ENCODE measurements at regions of chr1 and their contacts with region 1.

Region 1: DNA sequence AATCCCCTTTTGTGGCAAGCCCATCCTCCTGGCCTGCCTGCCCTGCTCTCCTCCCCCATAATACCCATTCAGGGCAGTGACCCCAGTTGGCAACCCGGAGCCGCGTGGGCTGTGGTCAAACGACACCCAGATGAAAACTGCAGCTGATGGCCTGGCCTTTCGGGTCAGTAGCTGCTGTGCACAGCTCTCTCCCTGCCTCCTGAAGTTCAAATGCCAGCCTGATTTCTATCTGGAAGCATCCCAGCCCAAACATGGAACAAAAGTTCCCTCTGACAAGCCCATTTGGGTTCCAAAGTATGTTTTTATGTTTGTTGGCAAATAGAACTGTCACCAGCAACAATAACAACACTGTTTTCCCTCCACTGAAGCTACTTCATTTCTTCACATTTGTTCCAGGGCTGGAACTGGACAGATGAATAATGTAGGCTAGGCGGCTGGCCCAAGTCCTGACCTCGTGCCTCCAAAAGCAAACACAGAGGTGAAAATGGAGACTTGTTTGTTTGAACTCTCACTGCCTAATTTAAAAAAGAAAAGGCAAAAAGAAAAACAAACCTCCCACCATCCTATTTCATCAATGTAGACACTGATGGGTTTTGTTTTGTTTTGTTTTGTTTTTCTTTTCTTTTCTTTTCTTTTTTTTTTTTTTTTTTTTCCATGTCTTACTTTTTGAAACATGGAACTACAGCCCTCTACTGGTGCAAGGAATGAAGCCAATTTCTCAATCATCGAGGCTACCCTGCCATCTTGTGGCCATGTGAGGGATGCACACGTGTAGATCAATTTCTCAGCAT is 179.0 kb downstream of the ADSS2 start:
- DNase-seq: peak; percentile 94
- ATAC-seq: peak; percentile 32
- H3K4me3 ChIP-seq: peak overlapping the region; percentile 60; the same call in 1 of the 2 replicates
- H3K27ac ChIP-seq: no peak overlapping the region
- H3K4me1 ChIP-seq: peaks cover 33% of the 10 kb centered on the region
- H3K27me3 ChIP-seq: no peaks in the 10 kb centered on the region
- CTCF ChIP-seq: peak; percentile 100

Region 2: DNA sequence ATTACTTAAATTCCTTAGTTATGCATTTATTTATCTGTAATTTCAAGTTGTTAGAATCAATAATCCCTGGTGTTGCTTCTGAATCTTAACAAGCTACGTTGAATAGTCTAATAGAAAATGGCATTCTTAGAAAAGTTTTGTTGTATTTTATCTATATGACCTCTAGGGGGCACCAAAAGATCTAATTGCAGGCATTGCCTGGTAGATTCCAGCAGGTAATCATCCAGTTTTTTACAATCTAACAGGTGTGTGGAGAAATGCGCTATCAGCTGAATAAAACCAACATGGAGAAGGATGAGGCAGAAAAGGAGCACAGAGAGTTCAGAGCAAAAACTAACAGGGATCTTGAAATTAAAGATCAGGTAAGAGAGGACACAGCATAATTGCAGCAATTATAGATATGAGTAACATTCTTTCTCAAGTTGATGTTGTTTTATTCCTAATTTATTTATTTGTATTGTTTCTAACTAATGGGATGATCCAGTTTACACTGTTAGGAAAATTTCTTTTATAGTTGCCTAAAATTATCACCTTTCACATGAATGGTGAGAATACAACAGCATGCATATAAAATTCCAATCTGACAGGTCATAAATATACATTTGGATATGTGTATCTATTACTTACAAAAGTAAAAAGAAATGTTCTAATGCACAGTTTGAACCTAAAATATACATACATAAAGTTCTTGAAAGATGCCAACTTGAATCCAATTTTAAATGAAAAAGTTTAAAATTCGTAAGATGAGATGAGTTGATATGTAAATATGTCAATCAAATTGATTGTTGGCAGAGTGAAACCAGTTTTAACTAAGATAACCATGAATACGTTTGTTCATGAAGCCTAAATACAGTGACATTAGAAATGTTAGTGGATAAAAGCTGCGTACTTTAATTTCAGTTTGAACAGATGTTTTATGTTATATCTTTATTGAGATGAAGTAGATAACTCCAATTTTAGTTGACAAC is 928.4 kb before region 1 on chr1:
- CTCF ChIA-PET with region 1: interaction called, 3 read pairs
- POLR2A ChIA-PET with region 1: no interaction called
- intact Hi-C with region 1: loop called (anchors 1 kb)
- DNase-seq: peak; percentile 88
- ATAC-seq: peak; percentile 61
- H3K4me3 ChIP-seq: no peak overlapping the region
- H3K27ac ChIP-seq: no peak overlapping the region
- H3K4me1 ChIP-seq: peaks cover 7% of the 10 kb centered on the region
- H3K27me3 ChIP-seq: no peaks in the 10 kb centered on the region
- CTCF ChIP-seq: peak; percentile 98

Region 3: GRCh38 chr1:243748706-243749283 is 523.9 kb before region 1 on chr1:
- CTCF ChIA-PET with region 1: no interaction called
- POLR2A ChIA-PET with region 1: no interaction called
- intact Hi-C with region 1: loop called (anchors 1 kb)
- DNase-seq: peak; percentile 90
- ATAC-seq: peak; percentile 100
- H3K4me3 ChIP-seq: no peak overlapping the region
- H3K27ac ChIP-seq: no peak overlapping the region
- H3K4me1 ChIP-seq: peaks cover 5% of the 10 kb centered on the region
- H3K27me3 ChIP-seq: no peaks in the 10 kb centered on the region
- CTCF ChIP-seq: peak; percentile 88

Region 4: DNA sequence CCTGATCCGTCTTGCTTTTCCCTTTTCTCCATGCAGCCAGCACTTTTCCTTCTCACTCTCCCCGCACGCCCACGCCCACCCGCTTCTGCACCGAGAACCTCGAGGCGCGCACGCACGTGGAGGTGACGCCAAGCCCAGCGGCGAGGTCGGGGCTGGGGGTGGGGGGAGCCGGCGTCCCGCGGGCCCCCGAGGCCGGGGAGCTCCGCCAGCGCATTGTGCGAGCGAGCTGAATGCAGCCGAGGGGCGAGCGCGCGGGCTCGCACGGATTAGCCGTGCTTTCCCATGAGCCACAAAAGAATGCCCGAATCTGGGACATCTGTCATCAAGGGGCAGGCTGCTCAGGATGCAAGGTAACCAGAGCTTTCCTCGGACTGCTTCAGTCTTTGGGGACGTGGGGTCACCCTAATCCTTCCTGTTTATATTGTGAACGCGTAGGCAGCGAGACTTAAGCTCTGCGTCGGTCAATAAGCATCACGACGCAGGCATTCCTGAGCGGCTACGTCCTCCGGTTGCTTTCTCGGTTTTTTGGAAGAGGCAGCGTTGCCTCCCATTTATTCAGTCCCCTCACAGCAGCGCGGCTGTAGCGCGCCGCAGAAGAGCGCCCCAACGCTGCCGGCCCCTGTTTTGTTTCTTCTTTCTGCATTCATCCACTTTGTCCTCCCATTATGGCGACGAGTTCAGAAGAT is 355.3 kb before region 1 on chr1:
- CTCF ChIA-PET with region 1: no interaction called
- POLR2A ChIA-PET with region 1: no interaction called
- intact Hi-C with region 1: loop called (anchors 2 kb)
- DNase-seq: peak; percentile 93
- ATAC-seq: peak; percentile 83
- H3K4me3 ChIP-seq: peak overlapping the region; percentile 70
- H3K27ac ChIP-seq: peak overlapping the region; percentile 43
- H3K4me1 ChIP-seq: peaks cover 29% of the 10 kb centered on the region
- H3K27me3 ChIP-seq: no peaks in the 10 kb centered on the region
- CTCF ChIP-seq: peak; percentile 31; the same call in 1 of the 2 replicates

Region 5: DNA sequence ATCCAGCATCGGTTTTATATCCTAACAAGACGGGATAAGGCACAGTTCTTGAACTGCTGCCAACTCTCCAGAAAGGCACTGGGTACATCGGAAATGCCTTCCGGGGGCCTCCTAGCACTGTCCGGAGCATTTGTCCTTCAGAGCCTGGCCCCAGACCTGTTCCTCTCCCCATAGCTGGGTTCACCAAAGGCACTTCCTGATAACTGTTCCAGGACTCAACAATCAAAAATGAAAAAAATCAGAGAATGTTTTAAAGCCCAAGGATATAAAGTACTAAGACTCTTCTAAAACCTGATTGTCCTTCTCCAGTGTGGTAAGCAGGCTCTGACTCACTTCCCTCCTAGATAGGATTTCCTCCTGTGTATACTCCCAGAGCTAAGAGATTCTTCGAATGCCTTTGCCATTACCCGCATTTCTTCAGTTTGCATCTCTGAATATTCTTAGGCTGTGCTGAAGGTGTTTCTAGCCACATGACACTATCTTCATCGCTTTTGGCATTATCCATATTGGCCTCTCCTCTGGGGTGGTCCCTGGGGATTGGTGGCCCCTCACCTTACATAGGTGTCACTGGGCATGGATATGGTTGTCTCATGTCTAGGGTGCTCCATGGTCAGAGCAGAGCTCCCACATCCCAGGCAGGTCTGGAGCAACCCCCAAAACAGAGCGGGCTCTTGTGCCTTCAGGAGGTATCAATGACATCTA is 108.7 kb before region 1 on chr1:
- CTCF ChIA-PET with region 1: no interaction called
- POLR2A ChIA-PET with region 1: no interaction called
- intact Hi-C with region 1: loop called (anchors 1 kb)
- DNase-seq: peak; percentile 99
- ATAC-seq: peak; percentile 92
- H3K4me3 ChIP-seq: peak overlapping the region; percentile 45
- H3K27ac ChIP-seq: peak overlapping the region; percentile 78
- H3K4me1 ChIP-seq: peaks cover 38% of the 10 kb centered on the region
- H3K27me3 ChIP-seq: no peaks in the 10 kb centered on the region
- CTCF ChIP-seq: no peak

Region 6: DNA sequence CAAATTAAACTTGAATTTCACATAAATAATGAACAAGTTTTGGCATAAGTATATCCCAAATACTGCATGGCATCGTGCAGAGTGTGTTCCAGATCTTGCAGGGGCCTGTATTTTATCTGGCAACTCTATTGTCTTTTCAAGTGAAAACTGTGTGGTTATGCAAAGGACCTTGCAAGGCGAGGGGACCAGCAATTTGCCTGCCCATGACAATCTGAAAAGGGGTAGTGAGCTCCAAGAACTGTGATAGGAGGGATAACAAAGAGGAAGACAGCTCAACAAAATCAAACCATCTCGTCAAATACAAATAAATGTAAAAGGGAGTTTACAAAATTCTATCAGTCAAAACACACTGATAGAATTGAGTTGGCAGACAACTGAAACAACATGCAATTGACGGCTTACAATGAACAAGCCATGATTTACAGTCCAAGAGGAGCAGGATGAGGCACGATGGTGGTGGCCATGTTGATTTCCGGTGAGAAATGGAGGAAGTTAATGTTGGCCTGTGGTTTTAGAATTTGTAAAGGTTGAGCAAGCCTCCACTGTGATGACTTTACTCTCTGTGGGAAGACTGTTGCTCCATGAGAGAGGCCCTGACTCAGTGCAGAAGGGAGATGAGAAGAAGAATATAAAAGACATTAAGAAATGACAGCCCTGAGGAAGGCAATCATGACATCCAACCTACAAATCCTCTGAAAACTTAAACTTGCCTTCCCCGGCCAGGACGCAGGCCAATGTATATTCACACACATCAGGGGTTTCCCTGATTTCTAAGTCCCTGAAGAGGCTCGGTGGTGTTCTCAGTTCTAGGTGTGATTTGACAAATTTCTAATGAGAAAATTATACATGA is 46.8 kb after region 1 on chr1:
- CTCF ChIA-PET with region 1: no interaction called
- POLR2A ChIA-PET with region 1: no interaction called
- intact Hi-C with region 1: no loop called
- DNase-seq: peak; percentile 69
- ATAC-seq: no peak
- H3K4me3 ChIP-seq: no peak overlapping the region
- H3K27ac ChIP-seq: peak overlapping the region; percentile 37
- H3K4me1 ChIP-seq: peaks cover 30% of the 10 kb centered on the region
- H3K27me3 ChIP-seq: no peaks in the 10 kb centered on the region
- CTCF ChIP-seq: no peak

Region 7: DNA sequence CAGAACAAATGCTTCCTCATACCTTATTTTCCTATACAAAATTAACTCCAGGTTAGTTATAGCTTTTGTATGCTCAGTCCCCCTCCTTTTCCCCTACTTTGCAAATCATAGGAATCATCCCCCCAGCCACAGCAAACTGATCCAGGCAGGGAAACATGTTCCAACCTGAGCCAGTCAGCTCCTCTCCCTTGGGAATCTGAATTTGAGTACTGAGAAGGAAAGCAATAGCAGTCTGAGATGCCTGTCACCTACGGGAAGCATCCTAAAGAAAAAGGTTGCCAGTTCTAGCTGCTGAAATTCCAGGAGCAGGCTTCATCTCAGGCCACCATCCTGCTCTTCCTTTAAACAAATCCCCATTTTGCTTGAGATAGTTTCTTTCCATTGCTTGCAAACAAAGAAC is 172.2 kb after region 1 on chr1:
- CTCF ChIA-PET with region 1: interaction called, 3 read pairs
- POLR2A ChIA-PET with region 1: interaction called, 10 read pairs
- intact Hi-C with region 1: no loop called
- DNase-seq: no peak
- ATAC-seq: no peak
- H3K4me3 ChIP-seq: no peak overlapping the region
- H3K27ac ChIP-seq: no peak overlapping the region
- H3K4me1 ChIP-seq: peaks cover 18% of the 10 kb centered on the region
- H3K27me3 ChIP-seq: no peaks in the 10 kb centered on the region
- CTCF ChIP-seq: no peak